Right cardiac atrium (tissue), 5 donors: ENCODE measurements at regions of chr4 and their contacts with region 1.

Region 1: DNA sequence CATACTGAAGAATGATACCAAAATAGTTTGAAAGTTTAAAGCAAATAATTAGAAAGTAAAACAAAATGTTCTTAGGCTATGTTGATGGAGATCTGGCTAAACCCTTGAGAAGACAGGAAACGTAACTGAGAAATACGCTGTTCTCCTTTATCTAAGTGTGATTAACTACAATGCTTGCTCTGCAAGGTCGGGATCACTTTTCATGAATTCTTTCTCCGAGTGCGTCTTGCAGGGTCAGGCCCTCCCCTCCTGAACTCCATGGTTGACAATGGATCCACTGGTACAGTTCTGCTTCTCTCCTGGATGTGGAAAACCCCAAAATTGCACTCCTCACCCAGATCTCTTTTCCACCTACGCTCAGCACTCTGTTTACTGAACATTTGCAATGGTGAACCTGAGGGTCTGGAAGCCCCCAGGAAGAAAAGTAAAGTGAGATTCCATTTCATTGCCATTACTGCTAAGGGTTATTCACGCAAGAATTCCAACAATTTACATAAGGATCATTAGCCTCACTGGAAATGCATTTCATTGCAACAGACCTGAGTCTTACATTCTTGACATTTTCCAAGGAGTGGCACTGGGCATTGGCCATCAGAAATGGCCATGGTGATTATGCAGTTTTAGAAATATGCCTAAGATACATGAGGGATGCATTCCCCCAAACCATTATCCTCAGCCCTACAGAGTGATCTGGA is 24.6 kb upstream of the WWC2 start:
- DNase-seq: no peak
- ATAC-seq: no peak
- H3K4me3 ChIP-seq: no peak overlapping the region
- H3K27ac ChIP-seq: no peak overlapping the region
- H3K4me1 ChIP-seq: no peaks in the 10 kb centered on the region
- H3K27me3 ChIP-seq: no peaks in the 10 kb centered on the region

Region 2: DNA sequence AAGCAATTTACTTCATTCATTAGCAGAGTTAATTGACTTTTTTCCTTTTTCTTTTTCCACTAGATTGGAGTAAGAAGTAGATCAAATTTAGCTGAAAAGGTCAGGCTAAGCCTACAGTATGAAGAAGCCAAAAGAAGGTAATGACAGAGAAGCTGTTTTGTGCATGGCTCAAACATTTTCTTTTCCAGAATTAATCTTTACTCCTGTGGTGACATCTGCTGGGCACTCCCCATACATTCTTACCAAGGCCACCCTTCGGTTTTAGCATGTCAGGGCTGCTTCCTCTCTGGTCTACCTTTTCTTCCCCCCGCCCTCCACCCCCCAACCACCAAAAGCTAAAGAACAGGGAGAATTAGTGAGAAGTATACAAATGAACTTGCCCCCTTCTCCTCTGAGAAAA is 175.4 kb after region 1 on chr4:
- intact Hi-C with region 1: loop called in 2 of 4 experiments (anchors 5 kb)
- DNase-seq: no peak
- ATAC-seq: peak in 1 of 2 donors; percentile 41
- H3K4me3 ChIP-seq: no peak overlapping the region
- H3K27ac ChIP-seq: no peak overlapping the region
- H3K4me1 ChIP-seq: no peaks in the 10 kb centered on the region
- H3K27me3 ChIP-seq: no peaks in the 10 kb centered on the region

Region 3: GRCh38 chr4:183256756-183257385 is 182.4 kb after region 1 on chr4:
- intact Hi-C with region 1: loop called (anchors 2 to 5 kb)
- DNase-seq: peak; percentile 62 to 87 (median 79)
- ATAC-seq: peak; percentile 86 to 88
- H3K4me3 ChIP-seq: no peak overlapping the region
- H3K27ac ChIP-seq: no peak overlapping the region
- H3K4me1 ChIP-seq: no peaks in the 10 kb centered on the region
- H3K27me3 ChIP-seq: no peaks in the 10 kb centered on the region

Region 4: DNA sequence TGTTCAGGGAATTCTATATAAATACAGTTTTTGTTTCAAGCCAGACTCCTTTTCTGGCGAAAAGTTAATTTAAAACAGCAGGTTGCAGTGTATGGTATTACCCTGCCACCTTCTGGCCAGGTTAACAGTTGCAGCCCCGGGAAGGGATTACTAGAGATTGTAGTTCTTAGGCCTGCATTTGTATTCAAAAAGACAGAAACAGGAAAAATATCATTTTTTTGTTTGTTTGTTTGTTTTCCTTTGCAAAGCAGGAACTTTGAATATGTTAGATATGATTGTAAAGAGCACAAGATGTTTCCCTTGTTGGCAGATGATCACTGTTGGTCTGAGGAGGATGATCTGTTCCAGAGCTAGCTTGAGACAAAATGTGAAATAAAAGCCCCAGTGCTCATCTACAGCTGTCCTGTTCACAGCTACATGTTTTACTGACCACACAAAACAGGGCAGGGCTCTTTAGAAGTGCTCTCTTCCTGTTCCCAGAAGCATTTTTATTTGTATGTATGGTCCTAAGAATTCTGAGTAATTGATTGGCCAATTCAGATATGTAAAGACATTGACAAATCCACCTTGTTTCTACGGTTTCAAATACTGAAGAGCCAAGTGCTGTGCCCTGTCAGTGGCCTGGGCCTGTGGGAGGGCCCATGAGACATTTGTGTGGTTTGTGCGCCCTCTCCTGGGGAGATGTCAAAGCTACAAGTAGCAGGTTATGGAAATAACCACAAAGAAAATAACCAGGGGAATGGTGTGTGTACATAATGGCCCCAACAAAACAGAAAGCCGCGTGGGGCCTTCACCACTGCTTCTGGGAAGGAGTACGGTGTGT is 187.7 kb after region 1 on chr4:
- intact Hi-C with region 1: loop called in 3 of 4 experiments (anchors 2 to 5 kb)
- DNase-seq: peak; percentile 75 to 91 (median 81)
- ATAC-seq: peak; percentile 91 to 95
- H3K4me3 ChIP-seq: no peak overlapping the region
- H3K27ac ChIP-seq: no peak overlapping the region
- H3K4me1 ChIP-seq: no peaks in the 10 kb centered on the region
- H3K27me3 ChIP-seq: no peaks in the 10 kb centered on the region